Naive thymus-derived CD4-positive, alpha-beta T cell (primary cell): ENCODE measurements at regions of chr6 and their contacts with region 1.

Region 1: DNA sequence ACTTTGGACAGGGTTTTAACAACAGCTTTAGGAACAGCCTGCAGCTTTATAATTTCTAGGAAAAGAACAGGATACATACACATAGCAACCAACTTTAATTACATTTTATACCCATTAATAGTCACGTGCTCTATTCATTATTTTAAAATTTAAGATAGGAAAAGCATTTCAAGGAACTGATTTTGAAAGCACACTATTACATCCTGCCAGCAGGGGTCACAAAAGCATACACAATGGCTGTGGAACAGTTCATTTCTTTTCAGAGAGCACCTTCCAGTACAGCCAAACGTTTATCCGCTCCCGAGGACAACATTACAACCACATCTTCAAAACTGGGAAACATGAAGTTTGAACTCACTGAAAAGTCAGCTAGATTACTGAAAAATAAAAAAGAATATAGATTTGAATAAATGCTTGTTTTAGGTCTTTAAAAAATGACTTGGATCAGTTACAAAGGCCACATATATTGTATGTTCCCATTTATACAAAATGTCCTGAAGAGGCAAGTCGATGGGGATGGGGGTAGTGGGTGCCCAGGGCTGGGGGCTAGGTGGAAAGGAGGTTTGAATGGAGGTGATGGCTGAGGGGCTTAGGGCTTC is 104.6 kb upstream of the EXOC2 start:
- DNase-seq: peak in 5 of 9 donors; percentile 18 to 36 (median 22)
- ATAC-seq: peak; percentile 61
- H3K4me3 ChIP-seq: no peak overlapping the region
- H3K4me3 Mint-ChIP-seq: no peak overlapping the region
- H3K27ac ChIP-seq: no peak overlapping the region
- H3K27ac Mint-ChIP-seq: no peak overlapping the region
- H3K4me1 ChIP-seq: no peaks in the 10 kb centered on the region
- H3K4me1 Mint-ChIP-seq: no peaks in the 10 kb centered on the region
- H3K27me3 ChIP-seq: peaks cover 0 to 11% of the 10 kb centered on the region in 2 donors
- H3K27me3 Mint-ChIP-seq: peaks cover 47 to 67% (median 51%) of the 10 kb centered on the region in 5 donors

Region 2: DNA sequence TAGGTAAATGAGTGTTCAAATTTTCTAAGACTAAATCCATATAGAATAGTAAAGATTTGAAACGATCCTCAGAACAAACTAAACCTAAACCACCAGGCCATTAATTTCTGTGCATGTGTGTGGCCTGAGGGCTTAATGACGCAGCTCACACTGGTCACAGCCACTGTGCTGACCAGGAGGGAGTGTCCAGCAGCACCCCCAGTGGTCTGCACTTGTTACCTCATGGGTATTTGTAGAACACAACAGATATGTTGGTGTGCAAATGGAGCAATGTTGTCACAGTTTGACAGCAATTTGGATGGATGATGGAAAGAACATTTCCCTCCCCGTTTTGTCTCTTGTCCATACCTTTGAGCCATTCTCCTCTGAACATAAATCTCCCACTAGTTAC is 17.8 kb after region 1 on chr6:
- CTCF ChIA-PET with region 1: no interaction called
- POLR2A ChIA-PET with region 1: no interaction called
- intact Hi-C with region 1: no loop called
- DNase-seq: no peak
- ATAC-seq: no peak
- H3K4me3 ChIP-seq: no peak overlapping the region
- H3K4me3 Mint-ChIP-seq: no peak overlapping the region
- H3K27ac ChIP-seq: no peak overlapping the region
- H3K27ac Mint-ChIP-seq: no peak overlapping the region
- H3K4me1 ChIP-seq: no peaks in the 10 kb centered on the region
- H3K4me1 Mint-ChIP-seq: peaks cover 0 to 8% (median 7%) of the 10 kb centered on the region in 7 donors
- H3K27me3 ChIP-seq: no peaks in the 10 kb centered on the region
- H3K27me3 Mint-ChIP-seq: peaks cover 0 to 8% (median 7%) of the 10 kb centered on the region in 5 donors

Region 3: DNA sequence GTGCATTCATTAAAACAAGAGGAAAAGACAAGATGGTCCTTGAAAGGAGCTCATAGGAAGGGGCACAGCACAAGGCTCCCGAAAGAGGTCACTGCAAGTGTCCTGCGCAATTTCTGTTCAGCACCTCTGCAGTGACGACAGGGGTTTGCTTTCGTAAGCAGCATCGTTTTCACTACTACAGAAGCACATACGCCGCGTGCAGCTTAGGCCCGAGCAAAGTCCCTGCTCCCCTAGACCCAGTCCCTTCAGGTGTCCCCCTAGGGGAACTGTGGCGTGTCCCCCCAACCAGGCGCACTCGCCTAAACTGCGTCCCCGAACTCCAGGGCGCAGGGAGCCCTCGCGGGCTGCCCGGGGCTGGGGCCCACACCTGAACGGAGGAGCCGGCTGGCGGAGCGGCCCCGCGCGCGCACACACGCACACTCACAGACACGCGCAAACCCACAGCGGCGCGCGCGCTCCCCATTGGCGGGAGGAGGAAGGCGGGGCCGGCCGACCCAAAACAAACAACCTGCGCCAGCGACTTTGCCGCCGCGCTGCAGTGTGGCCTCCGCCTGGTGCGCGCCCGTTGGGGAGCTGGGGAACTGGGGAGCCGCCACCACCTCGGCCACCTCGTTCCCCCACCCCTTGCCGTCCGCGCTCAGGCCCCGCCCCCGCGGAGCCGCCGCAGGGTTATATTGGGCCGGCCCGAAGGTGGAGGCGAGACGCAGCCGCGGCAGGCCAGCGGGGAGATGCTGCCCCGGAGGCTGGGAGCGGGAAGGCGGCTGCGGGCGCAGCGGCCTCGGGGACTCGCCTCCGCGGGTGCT is 514.0 kb after region 1 on chr6 and contains the start of gene FOXQ1:
- CTCF ChIA-PET with region 1: no interaction called
- POLR2A ChIA-PET with region 1: no interaction called
- intact Hi-C with region 1: loop called in 1 of 2 experiments (anchors 5 kb)
- DNase-seq: peak in 1 of 9 donors; percentile 28
- ATAC-seq: peak; percentile 16
- H3K4me3 ChIP-seq: no peak within 1 kb of the TSS
- H3K4me3 Mint-ChIP-seq: peak within 1 kb of the TSS; percentile 25 to 84 (median 73)
- H3K27ac ChIP-seq: no peak within 1 kb of the TSS
- H3K27ac Mint-ChIP-seq: peak within 1 kb of the TSS in 1 of 9 donors; percentile 78
- H3K4me1 ChIP-seq: no peaks in the 10 kb centered on the region
- H3K4me1 Mint-ChIP-seq: peaks cover 21 to 40% (median 32%) of the 10 kb centered on the region in 7 donors
- H3K27me3 ChIP-seq: peaks cover 7 to 8% of the 10 kb centered on the region in 2 donors
- H3K27me3 Mint-ChIP-seq: peaks cover 65 to 79% (median 72%) of the 10 kb centered on the region in 5 donors
- total RNA-seq, gene FOXQ1: not detected

Region 4: DNA sequence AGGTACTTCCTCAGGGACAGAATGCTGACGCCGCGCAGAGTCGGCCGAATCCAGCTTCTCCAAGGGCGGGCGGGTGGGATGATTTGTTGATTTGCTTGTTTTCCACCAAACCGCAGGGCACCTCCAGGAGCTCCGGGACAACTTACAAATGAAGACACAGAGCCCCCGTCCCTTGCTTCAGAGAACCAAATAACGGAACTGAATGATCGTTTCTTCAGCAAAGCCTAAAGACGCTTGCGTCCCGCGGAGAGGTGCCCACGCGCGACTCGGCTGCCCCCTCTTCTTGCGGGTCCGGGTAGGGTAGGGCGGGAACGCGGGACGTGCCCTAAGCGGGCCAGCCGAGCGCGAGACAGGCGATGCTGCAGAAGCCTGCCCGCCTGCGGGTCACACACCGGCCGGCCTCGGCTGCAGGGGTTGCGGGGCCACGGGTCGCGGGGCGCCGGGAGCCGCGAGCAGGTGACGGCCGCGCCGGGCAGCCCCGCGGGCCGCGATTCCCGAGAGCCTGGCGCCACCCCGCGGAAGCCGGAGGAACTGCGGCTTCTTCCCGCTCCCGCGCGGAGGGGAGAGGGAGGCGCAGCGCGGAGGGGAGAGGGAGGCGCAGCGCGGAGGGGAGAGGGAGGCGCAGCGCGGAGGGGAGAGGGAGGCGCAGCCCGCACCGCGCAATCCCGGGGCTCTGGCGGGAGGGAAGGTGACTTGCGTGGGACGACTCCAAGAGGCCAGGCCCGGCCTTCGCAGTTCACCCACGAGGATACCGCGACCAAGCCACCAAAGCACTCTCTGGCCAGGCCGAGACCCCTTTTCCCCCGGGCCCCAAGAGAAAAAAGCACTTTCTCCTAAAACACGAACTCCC is 584.1 kb after region 1 on chr6:
- CTCF ChIA-PET with region 1: interaction called, 3 read pairs
- POLR2A ChIA-PET with region 1: no interaction called
- intact Hi-C with region 1: loop called (anchors 1 to 5 kb)
- DNase-seq: peak in 8 of 9 donors; percentile 7 to 77 (median 49)
- ATAC-seq: peak; percentile 78
- H3K4me3 ChIP-seq: no peak overlapping the region
- H3K4me3 Mint-ChIP-seq: peak overlapping the region; percentile 31 to 75 (median 52)
- H3K27ac ChIP-seq: no peak overlapping the region
- H3K27ac Mint-ChIP-seq: no peak overlapping the region
- H3K4me1 ChIP-seq: peaks cover 0 to 16% of the 10 kb centered on the region in 2 donors
- H3K4me1 Mint-ChIP-seq: peaks cover 21 to 50% (median 37%) of the 10 kb centered on the region in 7 donors
- H3K27me3 ChIP-seq: peaks cover 8 to 20% of the 10 kb centered on the region in 2 donors
- H3K27me3 Mint-ChIP-seq: peaks cover 54 to 81% (median 57%) of the 10 kb centered on the region in 5 donors

Region 5: GRCh38 chr6:1396952-1397868 is 599.6 kb after region 1 on chr6:
- CTCF ChIA-PET with region 1: interaction called, 8 read pairs
- POLR2A ChIA-PET with region 1: no interaction called
- intact Hi-C with region 1: loop called (anchors 1 kb)
- DNase-seq: peak; percentile 39 to 75 (median 67)
- ATAC-seq: peak; percentile 78
- H3K4me3 ChIP-seq: no peak overlapping the region
- H3K4me3 Mint-ChIP-seq: peak overlapping the region in 5 of 10 donors; percentile 4 to 57 (median 41)
- H3K27ac ChIP-seq: no peak overlapping the region
- H3K27ac Mint-ChIP-seq: peak overlapping the region in 1 of 9 donors; percentile 24
- H3K4me1 ChIP-seq: no peaks in the 10 kb centered on the region
- H3K4me1 Mint-ChIP-seq: peaks cover 0 to 16% (median 6%) of the 10 kb centered on the region in 7 donors
- H3K27me3 ChIP-seq: peaks cover 0 to 17% of the 10 kb centered on the region in 2 donors
- H3K27me3 Mint-ChIP-seq: peaks cover 54 to 67% (median 59%) of the 10 kb centered on the region in 5 donors

Region 6: GRCh38 chr6:1436334-1437306 is 639.0 kb after region 1 on chr6:
- CTCF ChIA-PET with region 1: interaction called, 5 read pairs
- POLR2A ChIA-PET with region 1: no interaction called
- intact Hi-C with region 1: loop called in 1 of 2 experiments (anchors 1 kb)
- DNase-seq: peak in 8 of 9 donors; percentile 24 to 66 (median 56)
- ATAC-seq: peak; percentile 83
- H3K4me3 ChIP-seq: no peak overlapping the region
- H3K4me3 Mint-ChIP-seq: no peak overlapping the region
- H3K27ac ChIP-seq: no peak overlapping the region
- H3K27ac Mint-ChIP-seq: no peak overlapping the region
- H3K4me1 ChIP-seq: no peaks in the 10 kb centered on the region
- H3K4me1 Mint-ChIP-seq: peaks cover 0 to 5% (median 0%) of the 10 kb centered on the region in 7 donors
- H3K27me3 ChIP-seq: no peaks in the 10 kb centered on the region
- H3K27me3 Mint-ChIP-seq: peaks cover 34 to 59% (median 47%) of the 10 kb centered on the region in 5 donors

Region 7: DNA sequence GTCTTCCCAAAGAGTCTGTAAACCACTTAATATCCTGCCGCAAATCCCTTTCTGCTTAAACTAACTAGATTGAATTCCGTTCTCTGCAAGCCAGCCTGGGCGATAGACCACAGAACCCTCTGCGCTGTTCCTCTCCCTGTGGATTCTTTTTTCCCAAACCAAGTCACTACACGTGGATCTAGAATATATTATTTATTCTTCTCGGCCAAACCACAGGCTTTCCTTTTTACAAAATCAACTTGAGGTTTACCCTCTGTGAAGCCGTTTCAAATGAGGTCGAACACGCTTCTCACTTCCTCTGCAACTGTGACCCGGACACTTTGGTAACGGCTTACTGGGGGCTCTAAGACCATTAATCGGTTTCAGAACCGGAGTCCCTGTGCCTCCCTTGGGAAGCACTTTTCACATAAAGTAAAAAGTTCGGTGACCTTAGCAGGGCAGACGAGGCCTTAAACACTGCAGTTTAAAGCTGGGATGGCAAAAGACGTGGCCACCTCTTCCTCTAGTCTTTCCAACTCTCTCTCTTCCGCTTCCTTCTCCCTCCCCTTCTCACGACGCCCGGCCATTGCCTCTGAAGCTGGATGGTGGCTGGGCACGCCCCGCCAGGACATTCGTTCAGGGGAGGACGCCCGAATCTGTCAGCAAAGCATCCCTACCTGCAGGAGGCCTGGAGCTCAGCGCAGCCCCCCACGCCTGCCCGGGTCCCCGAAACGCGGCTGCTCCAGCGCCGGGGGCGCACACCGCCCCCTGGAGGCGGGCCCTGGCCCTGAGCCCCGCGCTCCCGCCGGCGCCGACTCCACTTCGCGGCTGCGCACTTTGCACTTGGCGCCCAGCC is 757.1 kb after region 1 on chr6:
- CTCF ChIA-PET with region 1: no interaction called
- POLR2A ChIA-PET with region 1: no interaction called
- intact Hi-C with region 1: no loop called
- DNase-seq: peak; percentile 45 to 81 (median 73)
- ATAC-seq: peak; percentile 94
- H3K4me3 ChIP-seq: peak overlapping the region; percentile 64
- H3K4me3 Mint-ChIP-seq: peak overlapping the region; percentile 76 to 93 (median 86)
- H3K27ac ChIP-seq: peak overlapping the region; percentile 36
- H3K27ac Mint-ChIP-seq: peak overlapping the region; percentile 47 to 96 (median 72)
- H3K4me1 ChIP-seq: peaks cover 4 to 7% of the 10 kb centered on the region in 2 donors
- H3K4me1 Mint-ChIP-seq: peaks cover 8 to 54% (median 25%) of the 10 kb centered on the region in 7 donors
- H3K27me3 ChIP-seq: no peaks in the 10 kb centered on the region
- H3K27me3 Mint-ChIP-seq: peaks cover 0 to 41% (median 6%) of the 10 kb centered on the region in 5 donors